ENCODE measurements at regions of chr3 and their contacts with region 1.

Region 1: DNA sequence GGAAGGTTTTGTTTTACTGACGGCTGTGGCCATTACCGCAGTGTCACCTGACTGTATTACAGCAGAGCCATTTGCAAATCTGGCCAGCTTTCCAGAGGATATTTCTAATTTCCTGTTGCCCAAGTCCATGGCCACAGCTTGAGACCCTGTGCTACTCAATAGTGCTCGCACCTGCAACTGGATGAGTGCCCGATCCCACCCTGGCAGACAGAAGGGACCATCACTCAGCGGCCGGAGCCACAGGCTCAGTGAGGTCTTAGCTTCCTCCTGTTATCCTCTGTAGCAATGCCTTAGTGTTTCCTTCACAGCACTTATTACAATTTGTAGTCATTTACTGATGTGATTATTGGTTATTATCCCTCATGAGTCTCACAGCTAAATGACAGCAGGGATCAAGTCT is 184.8 kb downstream of the LRRN1 start:
- DNase-seq: no peak
- H3K4me3 Mint-ChIP-seq: no peak overlapping the region
- H3K27ac Mint-ChIP-seq: no peak overlapping the region
- H3K4me1 Mint-ChIP-seq: no peaks in the 10 kb centered on the region
- H3K27me3 Mint-ChIP-seq: no peaks in the 10 kb centered on the region

Region 2: DNA sequence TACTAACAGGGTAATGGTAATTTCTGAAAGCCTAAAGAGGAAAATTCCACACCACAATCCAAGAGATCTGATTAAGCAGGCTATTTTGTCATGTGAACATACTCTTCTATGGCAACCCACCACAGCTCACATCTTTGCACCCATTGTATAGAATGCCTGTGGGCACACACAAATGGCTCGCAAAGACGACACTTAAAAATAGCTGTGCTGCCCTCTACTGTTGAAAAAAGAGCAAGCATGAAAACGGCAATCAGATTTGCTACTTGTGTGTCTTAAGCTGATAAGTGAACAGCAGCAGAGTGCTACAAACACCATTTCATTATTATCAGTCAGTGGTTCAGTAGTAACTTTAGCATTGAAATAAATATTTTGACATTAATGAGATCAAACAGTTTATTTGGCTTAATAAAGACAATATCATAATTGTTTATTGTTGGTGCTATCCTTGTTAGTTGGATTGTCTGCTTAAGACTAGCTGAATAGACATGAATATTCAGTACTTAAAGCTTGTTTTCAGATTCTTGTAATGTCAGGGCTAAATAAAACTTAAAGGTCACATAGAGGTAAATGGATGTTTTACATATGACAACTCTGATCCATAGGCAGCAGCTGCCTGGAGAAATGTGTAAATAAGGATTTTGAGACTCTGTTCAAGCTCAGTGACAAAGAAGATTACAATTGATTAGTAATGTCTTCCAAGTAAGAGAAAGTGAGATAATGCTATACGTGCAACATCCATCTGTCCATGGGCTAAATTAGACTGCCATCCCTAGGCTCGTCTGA is 14.3 kb after region 1 on chr3:
- CTCF ChIA-PET with region 1: interaction called, 15 read pairs
- POLR2A ChIA-PET with region 1: no interaction called
- intact Hi-C with region 1: no loop called
- DNase-seq: peak; percentile 12
- H3K4me3 Mint-ChIP-seq: no peak overlapping the region
- H3K27ac Mint-ChIP-seq: no peak overlapping the region
- H3K4me1 Mint-ChIP-seq: no peaks in the 10 kb centered on the region
- H3K27me3 Mint-ChIP-seq: no peaks in the 10 kb centered on the region